Activated CD8-positive, alpha-beta T cell treated with anti-CD3 and anti-CD28 coated beads for 36 hours (primary cell): ENCODE measurements at regions of chr19 and their contacts with region 1.

Region 1: DNA sequence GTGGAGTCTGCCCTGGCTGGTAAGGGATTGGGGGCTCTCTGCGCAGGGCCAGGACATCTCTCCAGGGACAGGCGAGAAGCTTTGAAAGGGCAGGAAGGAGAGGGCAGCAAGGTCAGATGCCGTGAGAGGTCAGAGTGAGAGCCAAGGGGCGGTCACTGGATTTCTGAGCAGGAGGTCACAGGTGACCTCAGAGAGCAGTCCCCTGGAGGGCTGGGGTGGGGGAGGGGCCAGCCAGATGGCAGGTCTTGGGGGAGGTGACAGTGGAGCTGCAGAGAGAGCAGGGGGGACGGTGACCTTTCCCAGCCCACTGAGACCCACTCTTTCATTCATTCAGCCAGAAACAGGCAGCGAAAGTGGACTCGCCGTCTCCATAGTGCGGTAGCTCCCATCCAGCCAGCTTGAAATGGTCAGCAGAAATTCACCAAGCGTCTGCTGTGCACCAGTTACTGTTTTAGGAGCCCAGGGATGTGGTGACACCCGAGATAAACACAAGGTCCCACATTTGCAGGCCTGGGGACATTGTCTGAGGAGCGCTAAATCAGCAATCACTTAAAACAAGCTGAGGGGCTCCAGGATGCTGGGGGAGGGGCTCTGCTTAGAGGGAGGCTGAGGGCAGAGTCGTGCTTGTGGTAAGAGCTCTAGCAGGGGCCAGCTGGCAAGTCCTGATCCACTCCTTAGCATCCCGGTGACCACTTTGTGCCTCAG is 10.2 kb downstream of the CARM1 start:
- DNase-seq: no peak
- ATAC-seq: no peak
- H3K4me3 Mint-ChIP-seq: no peak overlapping the region
- H3K27ac Mint-ChIP-seq: no peak overlapping the region
- H3K4me1 Mint-ChIP-seq: peaks cover 30% of the 10 kb centered on the region
- H3K27me3 Mint-ChIP-seq: no peaks in the 10 kb centered on the region
- CTCF ChIP-seq: no peak

Region 2: GRCh38 chr19:10870955-10871603 is 10.5 kb before region 1 on chr19 and contains the start of gene CARM1:
- CTCF ChIA-PET with region 1: interaction called, 11 read pairs
- POLR2A ChIA-PET with region 1: interaction called, 9 read pairs
- intact Hi-C with region 1: no loop called
- DNase-seq: peak; percentile 100
- ATAC-seq: peak; percentile 93
- H3K4me3 Mint-ChIP-seq: peak within 1 kb of the TSS; percentile 76
- H3K27ac Mint-ChIP-seq: peak within 1 kb of the TSS; percentile 87
- H3K4me1 Mint-ChIP-seq: peaks cover 28% of the 10 kb centered on the region
- H3K27me3 Mint-ChIP-seq: no peaks in the 10 kb centered on the region
- CTCF ChIP-seq: no peak
- total RNA-seq, gene CARM1: 95.1 to 95.4 TPM

Region 3: GRCh38 chr19:10979951-10980381 is 98.4 kb after region 1 on chr19:
- CTCF ChIA-PET with region 1: no interaction called
- POLR2A ChIA-PET with region 1: no interaction called
- intact Hi-C with region 1: no loop called
- DNase-seq: peak; percentile 52
- ATAC-seq: peak; percentile 81
- H3K4me3 Mint-ChIP-seq: no peak overlapping the region
- H3K27ac Mint-ChIP-seq: peak overlapping the region; percentile 11
- H3K4me1 Mint-ChIP-seq: peaks cover 28% of the 10 kb centered on the region
- H3K27me3 Mint-ChIP-seq: no peaks in the 10 kb centered on the region
- CTCF ChIP-seq: no peak